ENCODE measurements at regions of chr2 and their contacts with region 1.

Region 1: DNA sequence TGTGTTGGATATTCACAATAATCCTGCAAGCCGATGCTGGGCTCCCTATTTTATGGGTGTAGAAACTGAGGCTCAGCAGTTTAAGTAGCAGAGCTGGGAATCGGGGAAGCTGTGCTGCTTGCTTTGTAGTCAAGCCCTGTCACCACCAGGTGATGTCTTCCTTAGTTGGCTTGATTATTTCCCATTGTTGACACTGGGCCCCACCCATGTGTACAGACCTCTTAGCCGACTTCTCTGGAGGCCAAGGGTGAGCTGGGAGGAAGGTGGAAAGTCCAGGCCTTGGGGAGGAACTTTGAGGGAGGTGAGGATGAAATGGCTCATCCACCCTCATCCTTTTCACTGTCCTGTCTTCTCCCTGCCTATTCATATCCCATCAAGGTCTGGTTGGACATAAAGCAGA is 60.0 kb downstream of the CAPN13 start:
- DNase-seq: peak; percentile 56 to 71
- H3K4me3 ChIP-seq: no peak overlapping the region
- H3K4me3 Mint-ChIP-seq: no peak overlapping the region
- H3K27ac Mint-ChIP-seq: no peak overlapping the region
- H3K4me1 ChIP-seq: peaks cover 11% of the 10 kb centered on the region
- H3K4me1 Mint-ChIP-seq: peaks cover 6% of the 10 kb centered on the region
- H3K27me3 ChIP-seq: no peaks in the 10 kb centered on the region
- H3K27me3 Mint-ChIP-seq: peaks cover 4% of the 10 kb centered on the region
- CTCF ChIP-seq: peak in 1 of 2 experiments; percentile 54

Region 2: GRCh38 chr2:30807249-30807648 is 60.0 kb after region 1 on chr2 and contains the start of gene CAPN13:
- CTCF ChIA-PET with region 1: interaction called, 3 read pairs
- POLR2A ChIA-PET with region 1: no interaction called
- intact Hi-C with region 1: loop called (anchors 2 kb)
- DNase-seq: peak; percentile 83 to 89
- H3K4me3 ChIP-seq: no peak within 1 kb of the TSS
- H3K4me3 Mint-ChIP-seq: peak within 1 kb of the TSS; percentile 69
- H3K27ac Mint-ChIP-seq: peak within 1 kb of the TSS; percentile 65
- H3K4me1 ChIP-seq: peaks cover 12% of the 10 kb centered on the region
- H3K4me1 Mint-ChIP-seq: peaks cover 10% of the 10 kb centered on the region
- H3K27me3 ChIP-seq: no peaks in the 10 kb centered on the region
- H3K27me3 Mint-ChIP-seq: no peaks in the 10 kb centered on the region
- CTCF ChIP-seq: peak; percentile 17 to 63
- total RNA-seq, gene CAPN13: 2.1 and 3.3 TPM in 2 replicates

Measured in Caco-2 (cell line).